AG04450 (cell line): ENCODE measurements at regions of chr16 and their contacts with region 1.

Region 1: GRCh38 chr16:48409839-48410611 is 24.8 kb upstream of the SIAH1 start:
- DNase-seq: peak; percentile 69
- H3K4me3 ChIP-seq: no peak overlapping the region
- H3K27ac ChIP-seq: peak overlapping the region; percentile 69
- H3K27me3 ChIP-seq: no peaks in the 10 kb centered on the region
- CTCF ChIP-seq: no peak

Region 2: DNA sequence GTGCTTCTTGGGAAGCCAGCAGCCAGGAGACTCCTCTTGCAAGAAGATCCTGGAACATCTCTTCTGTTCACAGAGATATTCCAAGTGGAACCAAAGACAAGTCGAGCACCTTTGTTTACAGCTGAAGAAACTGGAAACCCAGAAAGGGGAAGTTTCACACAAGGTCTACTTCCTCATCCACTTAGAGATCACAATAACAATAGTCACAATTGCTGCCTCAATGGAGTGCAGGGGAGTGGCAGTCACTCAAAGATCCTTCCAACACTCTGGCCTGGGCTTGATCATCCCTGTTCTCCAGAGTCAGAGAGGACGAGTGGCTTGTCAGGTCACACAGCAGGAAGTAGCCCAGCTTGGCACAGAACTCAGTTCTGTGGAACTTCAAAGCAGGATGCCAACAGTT is 22.1 kb after region 1 on chr16:
- CTCF ChIA-PET with region 1: interaction called, 14 read pairs
- POLR2A ChIA-PET with region 1: no interaction called
- DNase-seq: no peak
- H3K4me3 ChIP-seq: no peak overlapping the region
- H3K27ac ChIP-seq: no peak overlapping the region
- H3K27me3 ChIP-seq: no peaks in the 10 kb centered on the region
- CTCF ChIP-seq: no peak

Region 3: GRCh38 chr16:48745541-48745940 is 335.5 kb after region 1 on chr16:
- CTCF ChIA-PET with region 1: no interaction called
- POLR2A ChIA-PET with region 1: no interaction called
- DNase-seq: no peak
- H3K4me3 ChIP-seq: no peak overlapping the region
- H3K27ac ChIP-seq: no peak overlapping the region
- H3K27me3 ChIP-seq: no peaks in the 10 kb centered on the region
- CTCF ChIP-seq: no peak